ENCODE measurements at regions of chr12 and their contacts with region 1.

Region 1: GRCh38 chr12:10716704-10717315 is 6.3 kb downstream of the YBX3 start:
- DNase-seq: peak; percentile 94
- H3K4me3 ChIP-seq: peak overlapping the region; percentile 3 to 13 (median 11)
- H3K27ac ChIP-seq: peak overlapping the region; percentile 71 to 98 (median 98)
- H3K4me1 ChIP-seq: peaks cover 47 to 59% (median 57%) of the 10 kb centered on the region in 4 donors
- H3K27me3 ChIP-seq: no peaks in the 10 kb centered on the region
- CTCF ChIP-seq: peak in 1 of 3 experiments; percentile 5
- EP300 ChIP-seq: no peak
- POLR2A ChIP-seq: no peak

Region 2: DNA sequence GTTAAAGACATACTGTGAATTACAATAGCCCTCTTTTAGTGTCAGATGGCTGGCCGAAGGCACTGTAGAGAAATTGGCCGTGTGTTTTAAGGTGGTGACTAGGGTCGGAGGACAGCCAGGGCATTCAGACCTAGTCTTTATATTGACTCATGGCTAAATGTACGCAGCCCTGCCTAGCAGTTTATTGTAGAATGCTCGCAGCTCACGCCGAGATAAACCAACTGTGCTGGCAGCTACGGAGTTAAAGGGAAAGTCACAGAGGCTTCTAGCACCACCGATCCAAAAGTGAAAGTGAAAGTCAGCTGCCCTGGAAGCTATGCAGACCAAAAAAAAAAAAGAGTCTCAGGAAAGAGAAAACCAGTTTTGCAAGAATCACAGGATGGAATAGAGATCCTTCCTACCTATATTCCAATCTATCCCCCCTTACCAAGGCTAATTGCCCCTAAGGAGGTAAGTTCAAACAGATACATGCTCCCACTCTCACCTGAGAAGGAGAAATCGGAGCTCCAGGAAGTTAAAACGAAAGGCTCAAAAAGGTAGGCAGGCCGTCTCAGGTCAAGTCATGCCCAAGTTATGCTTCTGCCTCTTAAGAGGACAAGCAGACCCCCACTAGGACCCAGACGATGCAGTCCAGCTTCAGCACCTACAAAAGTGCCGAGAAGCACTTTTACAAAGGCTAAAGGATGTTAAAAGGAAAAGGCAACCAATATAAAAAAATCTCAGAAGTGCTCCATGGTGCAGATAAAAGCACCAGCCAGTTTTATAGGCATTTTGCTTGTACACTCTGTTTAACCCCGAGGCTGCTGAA is 351.8 kb before region 1 on chr12:
- intact Hi-C with region 1: loop called (anchors 10 kb)
- DNase-seq: no peak
- H3K4me3 ChIP-seq: peak overlapping the region; percentile 64 to 73 (median 69)
- H3K27ac ChIP-seq: peak overlapping the region; percentile 90 to 95 (median 92)
- H3K4me1 ChIP-seq: peaks cover 15 to 44% (median 38%) of the 10 kb centered on the region in 4 donors
- H3K27me3 ChIP-seq: no peaks in the 10 kb centered on the region
- CTCF ChIP-seq: no peak
- EP300 ChIP-seq: no peak
- POLR2A ChIP-seq: no peak

Measured in esophagus muscularis mucosa (tissue), 4 donors.